GM18951 (cell line): ENCODE measurements at regions of chr17 and their contacts with region 1.

Region 1: DNA sequence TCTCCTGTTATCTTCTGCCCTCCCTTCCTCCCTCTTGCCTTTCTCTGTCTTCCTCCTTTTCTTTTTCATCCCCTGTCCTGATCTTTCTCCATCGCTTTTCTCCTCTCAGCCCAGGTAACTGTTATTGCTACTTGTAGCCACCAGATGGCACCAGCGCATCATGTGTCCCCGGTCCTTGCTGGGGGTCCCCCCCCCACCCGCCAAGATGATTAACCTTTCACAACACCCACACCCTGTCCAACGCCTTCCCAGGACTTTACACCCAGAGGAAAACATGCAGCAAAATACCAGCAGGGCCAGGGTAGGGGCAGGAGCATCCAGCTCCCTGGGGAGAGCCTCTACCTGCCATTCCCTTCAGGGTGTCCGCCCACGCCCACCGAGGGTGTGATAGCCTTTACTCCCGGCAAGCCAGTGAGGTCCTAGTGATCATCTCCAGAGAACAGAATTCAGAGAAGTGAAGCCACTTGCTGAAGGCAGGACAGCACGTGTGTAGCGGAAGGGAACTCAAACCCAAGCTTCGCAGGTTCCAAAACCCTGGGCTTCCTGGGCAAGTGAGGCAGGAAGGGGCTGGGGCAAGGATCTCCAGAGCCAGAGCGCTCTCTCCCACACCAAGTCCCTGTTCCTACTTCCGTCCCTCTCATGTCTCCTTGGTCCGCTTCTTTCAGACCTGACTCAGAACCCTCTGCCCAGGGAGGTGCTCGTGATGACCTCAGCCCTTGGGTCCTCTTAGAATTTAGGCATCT is 13.5 kb upstream of the TAC4 start:
- POLR2A ChIP-seq: no peak

Region 2: GRCh38 chr17:49997791-49998703 is 136.7 kb after region 1 on chr17:
- in situ Hi-C with region 1: loop called (anchors 10 kb)
- POLR2A ChIP-seq: no peak

Region 3: GRCh38 chr17:50094753-50095619 is 233.7 kb after region 1 on chr17 and contains the start of gene PDK2:
- in situ Hi-C with region 1: no loop called
- POLR2A ChIP-seq: peak; percentile 47